ENCODE measurements at regions of chr2 and their contacts with region 1.

Region 1: GRCh38 chr2:190911813-190912212 is 31.2 kb downstream of the GLS start:
- DNase-seq: no peak
- H3K4me3 Mint-ChIP-seq: no peak overlapping the region
- H3K27ac Mint-ChIP-seq: peak overlapping the region; percentile 76
- H3K4me1 Mint-ChIP-seq: peaks cover 29% of the 10 kb centered on the region
- H3K27me3 Mint-ChIP-seq: no peaks in the 10 kb centered on the region

Region 2: DNA sequence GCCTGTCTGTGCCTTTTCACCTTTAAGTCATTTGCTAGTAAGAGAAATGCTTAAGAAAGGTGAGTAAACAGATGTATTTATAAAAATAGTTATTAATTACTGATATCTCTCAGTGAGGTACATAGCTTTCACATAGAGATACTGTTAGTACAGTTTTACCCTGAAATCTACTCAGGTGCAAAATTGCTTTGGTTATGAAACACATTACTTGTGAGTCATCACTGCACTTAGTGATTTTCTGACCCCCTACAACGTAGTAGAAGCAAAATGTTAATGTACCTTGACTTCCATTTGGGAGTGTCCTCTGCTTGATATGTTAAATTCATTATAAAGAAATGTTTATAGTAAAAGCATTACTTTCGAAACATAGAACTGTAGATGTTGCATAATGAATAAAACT is 24.7 kb before region 1 on chr2:
- intact Hi-C with region 1: loop called (anchors 1 kb)
- DNase-seq: no peak
- H3K4me3 Mint-ChIP-seq: no peak overlapping the region
- H3K27ac Mint-ChIP-seq: no peak overlapping the region
- H3K4me1 Mint-ChIP-seq: peaks cover 62% of the 10 kb centered on the region
- H3K27me3 Mint-ChIP-seq: no peaks in the 10 kb centered on the region

Region 3: GRCh38 chr2:190984595-190984994 is 72.8 kb after region 1 on chr2:
- intact Hi-C with region 1: no loop called
- DNase-seq: no peak
- H3K4me3 Mint-ChIP-seq: no peak overlapping the region
- H3K27ac Mint-ChIP-seq: peak overlapping the region; percentile 46
- H3K4me1 Mint-ChIP-seq: peaks cover 78% of the 10 kb centered on the region
- H3K27me3 Mint-ChIP-seq: no peaks in the 10 kb centered on the region